Right ventricle myocardium inferior (tissue), 1 donor: ENCODE measurements at regions of chr5 and their contacts with region 1.

Region 1: GRCh38 chr5:137730336-137730735 is 5.6 kb downstream of the KLHL3 start:
- DNase-seq: no peak
- ATAC-seq: no peak

Region 2: GRCh38 chr5:137710076-137710475 is 20.3 kb before region 1 on chr5:
- intact Hi-C with region 1: loop called (anchors 2 kb)
- DNase-seq: no peak
- ATAC-seq: no peak

Region 3: DNA sequence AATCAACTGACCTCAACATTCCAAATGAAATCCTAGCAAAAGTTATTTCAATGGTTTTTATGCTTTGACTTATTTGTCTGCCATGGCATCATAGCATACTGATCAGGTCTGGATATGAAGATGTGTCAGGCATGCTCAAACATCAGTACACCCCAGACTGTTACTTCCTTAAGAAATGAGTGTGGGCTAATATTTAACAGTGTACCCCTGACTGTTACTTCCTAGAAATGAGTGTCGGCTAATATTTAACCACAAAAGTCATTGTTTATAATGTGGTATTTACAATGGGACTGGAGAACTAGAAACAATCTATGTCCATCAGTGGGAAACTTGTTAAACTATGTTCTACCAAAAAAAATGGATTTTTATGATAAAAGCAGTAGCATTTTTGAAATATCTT is 62.0 kb after region 1 on chr5:
- intact Hi-C with region 1: no loop called
- DNase-seq: no peak
- ATAC-seq: no peak

Region 4: GRCh38 chr5:137858223-137858916 is 128.0 kb after region 1 on chr5:
- intact Hi-C with region 1: no loop called
- DNase-seq: no peak
- ATAC-seq: peak; percentile 85